Activated CD4-positive, alpha-beta T cell treated with anti-CD3 and anti-CD28 coated beads for 36 hours (primary cell): ENCODE measurements at regions of chr17 and their contacts with region 1.

Region 1: DNA sequence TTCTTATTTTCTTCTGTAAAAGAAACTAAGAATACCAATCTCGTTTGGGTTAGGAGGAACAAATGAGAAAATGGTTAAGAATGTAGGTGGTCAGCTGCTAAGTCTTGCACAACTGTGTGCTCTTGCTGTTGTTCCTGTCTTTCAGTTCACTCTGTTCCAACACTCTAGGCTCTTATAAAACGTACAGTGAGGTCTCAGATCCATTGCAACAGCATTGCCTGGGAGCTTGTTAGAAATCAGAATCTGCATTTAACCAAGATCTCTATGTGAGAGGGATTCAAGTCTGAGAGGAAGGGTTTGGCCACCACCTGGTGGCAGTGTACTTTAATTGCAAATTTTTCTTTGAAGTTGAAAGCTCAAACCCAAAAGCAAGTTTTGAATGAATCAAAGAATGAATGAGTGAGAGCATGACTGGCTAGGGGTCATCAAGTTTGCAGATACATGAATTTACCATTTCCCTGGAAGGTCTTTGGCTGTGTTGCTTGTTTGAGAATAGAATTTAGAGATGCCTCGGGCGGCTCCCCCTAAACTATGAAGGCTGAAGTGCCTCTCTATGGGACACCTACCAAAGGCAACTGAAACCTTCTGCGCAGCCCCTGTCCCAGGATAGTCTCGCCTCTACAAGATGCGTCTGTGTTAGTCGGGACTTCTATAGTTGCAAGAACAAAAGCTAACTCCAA is 2.5 kb downstream of the ALOX15B start:
- DNase-seq: peak; percentile 72
- ATAC-seq: peak; percentile 84
- H3K4me3 Mint-ChIP-seq: no peak overlapping the region
- H3K27ac Mint-ChIP-seq: no peak overlapping the region
- H3K4me1 Mint-ChIP-seq: no peaks in the 10 kb centered on the region
- H3K27me3 Mint-ChIP-seq: peaks cover 25% of the 10 kb centered on the region

Region 2: GRCh38 chr17:7740481-7741001 is 300.8 kb before region 1 on chr17:
- CTCF ChIA-PET with region 1: interaction called, 3 read pairs
- POLR2A ChIA-PET with region 1: no interaction called
- intact Hi-C with region 1: loop called in 1 of 2 experiments (anchors 1 kb)
- DNase-seq: no peak
- ATAC-seq: no peak
- H3K4me3 Mint-ChIP-seq: no peak overlapping the region
- H3K27ac Mint-ChIP-seq: no peak overlapping the region
- H3K4me1 Mint-ChIP-seq: no peaks in the 10 kb centered on the region
- H3K27me3 Mint-ChIP-seq: peaks cover 10% of the 10 kb centered on the region

Region 3: DNA sequence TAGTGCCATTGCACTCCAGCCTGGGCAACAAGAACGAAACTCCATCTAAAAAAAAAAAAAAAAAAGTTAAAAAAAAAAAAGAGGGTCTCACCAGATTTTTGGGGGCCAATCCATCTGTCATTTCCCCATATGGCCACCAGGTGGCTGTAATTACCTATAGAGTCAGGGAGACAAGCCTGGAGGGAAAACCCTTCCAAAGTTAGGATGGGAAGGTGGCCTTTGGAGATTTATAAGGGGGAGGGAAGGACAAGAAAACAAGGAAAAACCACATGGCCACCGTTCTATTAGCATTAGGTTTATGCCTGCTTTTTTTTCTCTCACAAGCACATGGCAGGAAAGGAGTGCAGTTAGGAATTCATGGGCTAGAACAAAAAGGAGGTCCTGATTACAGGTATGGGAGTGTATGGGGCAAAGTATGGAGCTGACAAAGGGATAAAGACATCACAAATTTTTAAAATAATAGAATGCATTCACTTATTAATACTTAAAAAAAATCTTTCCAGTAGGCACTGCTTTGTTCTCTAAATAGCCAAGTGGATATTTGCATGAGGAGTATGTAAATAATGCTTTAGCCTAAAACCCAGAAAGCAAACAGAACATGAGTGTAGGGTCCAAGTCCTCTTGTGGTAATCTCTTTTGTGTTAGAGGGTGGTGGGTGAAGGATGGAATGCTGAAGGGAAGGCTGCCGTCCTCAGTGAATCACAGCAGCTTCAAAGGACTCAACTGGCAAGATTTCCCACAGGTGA is 178.5 kb before region 1 on chr17:
- CTCF ChIA-PET with region 1: interaction called, 9 read pairs
- POLR2A ChIA-PET with region 1: no interaction called
- intact Hi-C with region 1: loop called in 1 of 2 experiments (anchors 5 kb)
- DNase-seq: peak; percentile 58
- ATAC-seq: no peak
- H3K4me3 Mint-ChIP-seq: no peak overlapping the region
- H3K27ac Mint-ChIP-seq: no peak overlapping the region
- H3K4me1 Mint-ChIP-seq: peaks cover 13% of the 10 kb centered on the region
- H3K27me3 Mint-ChIP-seq: no peaks in the 10 kb centered on the region

Region 4: GRCh38 chr17:7997186-7997585 is 44.2 kb before region 1 on chr17:
- CTCF ChIA-PET with region 1: interaction called, 5 read pairs
- POLR2A ChIA-PET with region 1: no interaction called
- intact Hi-C with region 1: loop called in 1 of 2 experiments (anchors 5 kb)
- DNase-seq: peak; percentile 75
- ATAC-seq: peak; percentile 82
- H3K4me3 Mint-ChIP-seq: no peak overlapping the region
- H3K27ac Mint-ChIP-seq: no peak overlapping the region
- H3K4me1 Mint-ChIP-seq: peaks cover 6% of the 10 kb centered on the region
- H3K27me3 Mint-ChIP-seq: peaks cover 21% of the 10 kb centered on the region

Region 5: GRCh38 chr17:8031261-8031661 is 10.1 kb before region 1 on chr17:
- CTCF ChIA-PET with region 1: interaction called, 13 read pairs
- POLR2A ChIA-PET with region 1: interaction called, 4 read pairs
- intact Hi-C with region 1: no loop called
- DNase-seq: no peak
- ATAC-seq: no peak
- H3K4me3 Mint-ChIP-seq: no peak overlapping the region
- H3K27ac Mint-ChIP-seq: no peak overlapping the region
- H3K4me1 Mint-ChIP-seq: no peaks in the 10 kb centered on the region
- H3K27me3 Mint-ChIP-seq: peaks cover 22% of the 10 kb centered on the region